Heart left ventricle (tissue), 16 donors: ENCODE measurements at regions of chr16 and their contacts with region 1.

Region 1: DNA sequence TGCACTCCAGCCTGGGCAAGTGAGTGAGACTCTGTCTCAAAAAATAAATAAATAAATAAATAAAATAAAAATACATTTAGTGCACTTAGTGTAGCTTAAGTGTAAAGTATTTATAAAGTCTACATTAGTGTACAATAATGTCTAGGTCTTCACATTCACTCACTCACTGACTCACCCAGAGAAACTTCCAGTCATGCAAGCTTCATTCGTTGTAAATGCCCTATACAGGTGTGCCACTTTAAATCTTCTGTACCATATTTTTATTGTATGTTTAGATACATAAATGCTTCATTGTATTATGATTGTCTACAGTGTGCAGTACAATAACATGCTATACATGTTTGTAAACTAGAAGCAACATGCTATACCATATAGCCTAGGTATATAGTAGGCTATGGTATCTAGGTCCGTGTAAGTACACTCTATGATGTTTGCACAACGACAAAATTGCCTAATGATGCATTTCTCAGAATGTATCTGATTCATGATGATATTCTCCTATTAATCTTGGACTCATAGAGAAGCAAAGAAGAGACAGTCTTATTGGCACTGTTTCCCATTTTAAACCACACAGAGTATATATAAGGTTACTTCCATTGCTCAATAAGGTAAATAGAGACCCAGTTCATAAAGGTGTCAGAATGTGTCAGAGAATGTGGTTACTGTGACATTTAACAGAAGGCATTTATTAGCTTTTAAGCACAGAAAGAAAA is 1314.9 kb downstream of the CDH11 start:
- DNase-seq: no peak
- ATAC-seq: no peak
- H3K4me3 ChIP-seq: no peak overlapping the region
- H3K27ac ChIP-seq: no peak overlapping the region
- H3K4me1 ChIP-seq: no peaks in the 10 kb centered on the region
- H3K27me3 ChIP-seq: no peaks in the 10 kb centered on the region
- CTCF ChIP-seq: no peak
- POLR2A ChIP-seq: no peak

Region 2: GRCh38 chr16:63749276-63749675 is 57.7 kb before region 1 on chr16:
- intact Hi-C with region 1: loop called in 1 of 10 experiments (anchors 10 kb)
- DNase-seq: no peak
- ATAC-seq: no peak
- H3K4me3 ChIP-seq: no peak overlapping the region
- H3K27ac ChIP-seq: no peak overlapping the region
- H3K4me1 ChIP-seq: no peaks in the 10 kb centered on the region
- H3K27me3 ChIP-seq: no peaks in the 10 kb centered on the region
- CTCF ChIP-seq: no peak
- POLR2A ChIP-seq: no peak

Region 3: DNA sequence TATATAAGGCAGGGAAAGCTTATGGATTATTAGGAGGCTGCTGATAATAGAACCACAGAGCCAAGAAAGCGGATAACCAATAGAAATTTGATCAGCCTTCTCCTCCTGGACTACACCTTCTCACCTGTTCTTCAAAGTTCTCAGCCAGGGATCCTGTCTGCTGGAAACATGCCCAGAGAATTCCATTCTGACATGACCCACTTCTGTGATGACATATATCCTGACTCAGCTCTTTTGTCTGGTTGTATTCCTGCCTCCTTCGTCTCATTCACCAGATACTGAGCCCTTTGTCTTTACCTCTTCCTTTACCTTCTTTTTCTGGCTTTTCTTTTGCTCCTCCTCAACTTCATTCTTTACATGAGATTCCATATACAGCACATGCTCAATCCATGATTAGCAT is 738.8 kb after region 1 on chr16:
- intact Hi-C with region 1: loop called in 1 of 10 experiments (anchors 10 kb)
- DNase-seq: no peak
- ATAC-seq: no peak
- H3K4me3 ChIP-seq: no peak overlapping the region
- H3K27ac ChIP-seq: no peak overlapping the region
- H3K4me1 ChIP-seq: no peaks in the 10 kb centered on the region
- H3K27me3 ChIP-seq: no peaks in the 10 kb centered on the region
- CTCF ChIP-seq: no peak
- POLR2A ChIP-seq: no peak